Transverse colon (tissue), 4 donors: ENCODE measurements at regions of chr4 and their contacts with region 1.

Region 1: GRCh38 chr4:53346920-53347852 is 18.7 kb downstream of the SCFD2 start:
- DNase-seq: no peak
- H3K4me3 ChIP-seq: no peak overlapping the region
- H3K27ac ChIP-seq: no peak overlapping the region
- H3K4me1 ChIP-seq: peaks cover 0 to 3% (median 0%) of the 10 kb centered on the region in 4 donors
- H3K27me3 ChIP-seq: no peaks in the 10 kb centered on the region
- CTCF ChIP-seq: no peak
- EP300 ChIP-seq: no peak
- POLR2A ChIP-seq: no peak

Region 2: GRCh38 chr4:53233114-53233795 is 113.9 kb before region 1 on chr4:
- in situ Hi-C with region 1: loop called in 1 of 4 experiments (anchors 25 kb)
- intact Hi-C with region 1: no loop called
- DNase-seq: no peak
- H3K4me3 ChIP-seq: no peak overlapping the region
- H3K27ac ChIP-seq: no peak overlapping the region
- H3K4me1 ChIP-seq: no peaks in the 10 kb centered on the region
- H3K27me3 ChIP-seq: no peaks in the 10 kb centered on the region
- CTCF ChIP-seq: no peak
- EP300 ChIP-seq: no peak
- POLR2A ChIP-seq: no peak